ENCODE measurements at regions of chr12 and their contacts with region 1.

Region 1: GRCh38 chr12:8078398-8078797 is 3.7 kb upstream of the NECAP1 start:
- DNase-seq: peak in 3 of 4 experiments; percentile 23 to 61 (median 45)
- ATAC-seq: peak; percentile 31; the same call in 2 of the 3 replicates
- H3K4me3 ChIP-seq: no peak overlapping the region
- H3K27ac ChIP-seq: no peak overlapping the region
- H3K4me1 ChIP-seq: peaks cover 9 to 17% of the 10 kb centered on the region in 2 experiments; a peak in 3 of 5 replicates
- H3K27me3 ChIP-seq: no peaks in the 10 kb centered on the region
- CTCF ChIP-seq: peak; percentile 42 to 71 (median 44); a peak in 5 of 6 replicates
- EP300 ChIP-seq: no peak
- POLR2A ChIP-seq: no peak
- RAD21 ChIP-seq: peak; percentile 67 to 69

Region 2: DNA sequence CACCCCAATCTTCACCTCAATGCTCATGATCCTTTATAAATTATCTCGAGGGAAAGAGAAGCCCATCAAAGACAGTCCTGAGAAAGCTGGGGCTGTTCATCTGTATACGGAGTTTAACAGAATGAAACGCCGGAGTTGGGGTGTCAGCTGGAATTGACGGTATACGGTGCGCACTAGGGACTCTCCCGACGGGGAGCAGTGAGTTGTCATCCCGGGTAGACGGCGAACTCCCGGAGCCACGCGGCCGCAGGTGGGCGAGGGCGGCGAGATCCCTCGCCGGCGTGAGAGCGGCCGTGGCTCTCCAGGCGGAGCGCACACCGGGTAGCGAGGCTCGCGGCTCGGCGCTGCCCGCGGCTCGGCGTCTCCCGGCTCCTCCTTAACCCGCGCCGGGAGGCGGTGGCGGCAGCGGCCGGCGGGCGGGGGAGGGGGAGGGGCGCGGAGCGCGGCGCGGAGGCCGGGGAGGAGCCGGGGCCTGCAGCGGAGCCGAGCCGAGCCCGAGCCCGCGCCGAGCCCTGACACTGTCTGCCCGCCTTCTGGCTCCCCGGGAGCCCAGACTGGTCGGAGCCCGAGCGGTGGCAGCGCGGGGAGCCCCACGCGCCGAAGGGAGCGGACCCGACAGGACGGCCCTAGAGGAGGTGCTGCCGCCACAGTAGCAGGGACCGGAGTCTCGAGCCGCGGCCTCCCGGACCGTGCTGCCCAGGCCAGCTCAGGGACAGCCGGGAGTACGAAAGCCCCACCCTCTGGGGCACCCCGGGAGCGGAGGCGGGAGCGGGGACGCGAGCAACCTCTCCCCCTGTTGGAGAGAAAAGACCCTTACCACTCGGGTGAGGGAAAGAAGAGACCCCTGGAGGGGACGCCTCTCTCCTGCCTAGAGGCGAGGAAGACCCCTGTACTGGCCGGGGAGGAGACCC is 45.9 kb before region 1 on chr12 and contains the start of gene FOXJ2:
- CTCF ChIA-PET with region 1: no interaction called
- POLR2A ChIA-PET with region 1: interaction called, 3 read pairs
- in situ Hi-C with region 1: no loop called
- intact Hi-C with region 1: loop called (anchors 5 kb)
- DNase-seq: peak; percentile 68 to 73 (median 70)
- ATAC-seq: peak; percentile 80
- H3K4me3 ChIP-seq: peak within 1 kb of the TSS; percentile 62
- H3K27ac ChIP-seq: peak within 1 kb of the TSS; percentile 78
- H3K4me1 ChIP-seq: peaks cover 40 to 45% of the 10 kb centered on the region in 2 experiments
- H3K27me3 ChIP-seq: no peaks in the 10 kb centered on the region; a peak in 1 of 5 replicates
- CTCF ChIP-seq: no peak
- EP300 ChIP-seq: no peak
- POLR2A ChIP-seq: peak; percentile 65; the same call in 1 of the 2 replicates
- RAD21 ChIP-seq: no peak
- polyA plus RNA-seq, gene FOXJ2: 1.0 to 1.1 TPM

Region 3: GRCh38 chr12:8045952-8046944 is 32.1 kb before region 1 on chr12:
- CTCF ChIA-PET with region 1: interaction called, 18 read pairs
- POLR2A ChIA-PET with region 1: interaction called, 3 read pairs
- in situ Hi-C with region 1: loop called (anchors 5 kb)
- intact Hi-C with region 1: loop called (anchors 2 kb)
- DNase-seq: peak; percentile 61 to 73 (median 66)
- ATAC-seq: peak; percentile 79
- H3K4me3 ChIP-seq: no peak overlapping the region
- H3K27ac ChIP-seq: no peak overlapping the region
- H3K4me1 ChIP-seq: peaks cover 0 to under 1% of the 10 kb centered on the region in 2 experiments; a peak in 1 of 5 replicates
- H3K27me3 ChIP-seq: no peaks in the 10 kb centered on the region
- CTCF ChIP-seq: peak; percentile 73 to 74 (median 73)
- EP300 ChIP-seq: no peak
- POLR2A ChIP-seq: no peak
- RAD21 ChIP-seq: peak; percentile 60 to 73

Measured in K562 (cell line).